ENCODE measurements at regions of chr12 and their contacts with region 1.

Region 1: GRCh38 chr12:106247674-106248311 is at the start of gene CKAP4:
- DNase-seq: peak in 4 of 10 donors; percentile 31 to 78 (median 55)
- H3K4me3 ChIP-seq: peak within 1 kb of the TSS; percentile 62 to 92 (median 81)
- H3K27ac ChIP-seq: peak within 1 kb of the TSS; percentile 55 to 97 (median 90)
- H3K27me3 ChIP-seq: no peaks in the 10 kb centered on the region
- CTCF ChIP-seq: no peak
- total RNA-seq, gene CKAP4: 11.0 to 24.2 (median 17.7) TPM

Region 2: DNA sequence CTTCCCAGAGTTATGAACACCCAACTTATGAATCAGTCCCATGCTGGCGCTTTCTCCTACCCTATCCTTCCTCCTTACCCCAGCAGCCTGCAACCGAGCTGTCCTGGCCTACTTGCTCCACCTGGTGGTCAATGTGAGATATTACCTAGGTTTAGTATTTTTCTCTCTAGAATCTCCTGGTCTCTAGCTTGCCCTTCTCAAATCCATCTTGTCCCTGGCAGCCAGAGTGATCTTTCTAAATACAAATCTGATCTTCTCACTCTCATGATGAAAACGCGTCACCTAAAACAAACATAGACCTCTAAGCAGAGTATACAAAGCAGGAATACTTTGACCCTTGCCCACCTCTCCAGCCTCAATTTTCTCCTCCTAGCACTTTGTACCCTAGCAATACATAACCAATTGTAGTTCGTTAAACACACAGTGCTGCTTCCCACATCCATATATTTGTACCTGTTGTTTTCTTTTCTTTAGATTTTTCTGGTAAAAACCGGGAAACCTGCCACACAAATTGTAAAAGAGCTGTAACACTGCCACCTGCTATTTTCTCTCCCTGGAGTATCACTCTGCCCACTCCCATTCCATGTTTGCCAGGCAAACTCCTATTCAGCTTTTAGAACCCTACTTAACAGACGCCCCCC is 34.8 kb after region 1 on chr12:
- intact Hi-C with region 1: loop called in 1 of 2 experiments (anchors 5 kb)
- DNase-seq: no peak
- H3K4me3 ChIP-seq: no peak overlapping the region
- H3K27ac ChIP-seq: no peak overlapping the region
- H3K27me3 ChIP-seq: no peaks in the 10 kb centered on the region
- CTCF ChIP-seq: peak in 55 of 56 donors; percentile 36 to 68 (median 57)

Region 3: GRCh38 chr12:106302401-106303201 is 54.8 kb after region 1 on chr12 and contains the start of gene TCP11L2:
- intact Hi-C with region 1: loop called (anchors 1 to 5 kb)
- DNase-seq: peak; percentile 85 to 93 (median 90)
- H3K4me3 ChIP-seq: peak within 1 kb of the TSS; percentile 66 to 100 (median 93)
- H3K27ac ChIP-seq: peak within 1 kb of the TSS; percentile 88 to 100 (median 98)
- H3K27me3 ChIP-seq: no peaks in the 10 kb centered on the region
- CTCF ChIP-seq: no peak
- total RNA-seq, gene TCP11L2: 20.9 to 141 (median 42.8) TPM

Region 4: DNA sequence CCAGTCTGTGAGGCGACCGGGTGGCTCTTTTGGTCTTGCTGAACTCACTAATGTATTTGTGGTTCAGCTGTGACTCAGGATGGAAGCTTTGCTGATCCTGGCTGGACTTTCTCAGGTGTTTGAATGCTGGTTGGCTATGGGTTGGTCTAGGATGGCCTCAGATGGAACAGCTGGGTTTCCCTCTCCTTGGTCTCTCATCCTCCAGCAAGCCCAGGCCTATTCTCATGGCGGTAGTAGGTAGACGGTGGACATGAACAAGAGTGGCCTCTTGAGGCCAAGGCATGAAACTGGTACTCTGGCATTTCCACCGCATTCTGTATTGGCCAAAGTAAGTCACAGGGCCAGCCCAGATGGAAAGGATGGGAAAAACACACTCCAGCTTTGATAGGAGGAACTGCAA is 97.9 kb after region 1 on chr12:
- intact Hi-C with region 1: loop called in 1 of 2 experiments (anchors 5 kb)
- DNase-seq: peak in 2 of 10 donors; percentile 33 to 50
- H3K4me3 ChIP-seq: no peak overlapping the region
- H3K27ac ChIP-seq: peak overlapping the region in 12 of 59 donors; percentile 1 to 62 (median 24)
- H3K27me3 ChIP-seq: no peaks in the 10 kb centered on the region
- CTCF ChIP-seq: peak in 54 of 56 donors; percentile 22 to 77 (median 53)

Region 5: DNA sequence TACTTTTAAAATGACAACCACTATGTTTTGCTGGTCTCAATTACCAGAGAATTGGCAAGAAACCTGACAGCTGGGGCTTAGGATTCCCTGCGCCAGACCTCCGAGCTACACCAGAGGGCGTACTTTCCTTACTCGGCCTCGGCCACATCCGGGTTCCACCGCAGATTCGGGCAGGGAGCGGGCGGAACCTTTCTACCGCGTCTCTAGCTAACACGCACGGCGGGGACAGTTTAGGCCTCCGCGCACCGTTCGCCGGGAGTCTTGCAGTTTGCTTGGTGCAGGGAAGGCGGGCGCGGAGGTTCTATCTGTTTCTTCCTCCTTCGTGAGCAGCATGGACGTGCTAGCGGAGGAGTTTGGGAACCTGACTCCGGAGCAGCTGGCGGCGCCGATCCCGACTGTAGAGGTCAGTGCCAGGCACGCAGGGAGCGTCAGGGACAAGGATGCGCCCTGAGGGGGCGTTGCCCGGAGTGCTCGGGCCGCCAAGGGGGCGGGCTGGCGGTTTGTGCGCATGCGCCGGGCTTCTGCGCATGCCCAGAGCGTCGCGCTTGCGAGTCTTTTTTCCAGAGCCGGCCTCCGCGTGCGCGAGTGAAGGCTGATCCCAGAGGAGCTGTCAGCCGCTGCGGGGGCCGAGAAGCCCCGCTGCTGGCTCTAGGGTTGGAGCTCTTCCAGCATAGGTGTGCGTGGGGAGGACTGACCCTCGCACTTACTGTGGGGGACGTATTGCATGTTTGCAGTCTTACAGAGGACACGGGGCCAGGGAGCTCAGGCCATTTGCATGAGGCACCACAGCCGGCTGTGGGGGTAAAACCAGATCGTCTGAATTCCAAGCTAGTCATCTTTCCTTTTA is 110.0 kb after region 1 on chr12 and contains the start of gene POLR3B:
- intact Hi-C with region 1: loop called in 1 of 2 experiments (anchors 5 kb)
- DNase-seq: peak; percentile 92 to 96 (median 94)
- H3K4me3 ChIP-seq: peak within 1 kb of the TSS; percentile 39 to 96 (median 82)
- H3K27ac ChIP-seq: peak within 1 kb of the TSS; percentile 83 to 100 (median 99)
- H3K27me3 ChIP-seq: no peaks in the 10 kb centered on the region
- CTCF ChIP-seq: peak; percentile 81 to 98 (median 93)
- total RNA-seq, gene POLR3B: 7.5 to 25.1 (median 12.6) TPM

Measured in dorsolateral prefrontal cortex (tissue), 120 donors.